Dendritic cell treated with granulocyte-macrophage colony-stimulating factor and Interleukin-4, amounts not matched to agents 40 ng/mL and 50 ng/mL, for 4 days (primary cell): ENCODE measurements at regions of chr5 and their contacts with region 1.

Region 1: GRCh38 chr5:10201223-10201868 is 48.3 kb downstream of the ATPSCKMT start:
- H3K4me3 Mint-ChIP-seq: no peak overlapping the region
- H3K27ac Mint-ChIP-seq: no peak overlapping the region
- H3K4me1 Mint-ChIP-seq: peaks cover 6% of the 10 kb centered on the region
- H3K27me3 Mint-ChIP-seq: peaks cover 3% of the 10 kb centered on the region

Region 2: GRCh38 chr5:9361835-9362234 is 839.5 kb before region 1 on chr5:
- intact Hi-C with region 1: no loop called
- H3K4me3 Mint-ChIP-seq: no peak overlapping the region
- H3K27ac Mint-ChIP-seq: no peak overlapping the region
- H3K4me1 Mint-ChIP-seq: no peaks in the 10 kb centered on the region
- H3K27me3 Mint-ChIP-seq: peaks cover 1% of the 10 kb centered on the region

Region 3: DNA sequence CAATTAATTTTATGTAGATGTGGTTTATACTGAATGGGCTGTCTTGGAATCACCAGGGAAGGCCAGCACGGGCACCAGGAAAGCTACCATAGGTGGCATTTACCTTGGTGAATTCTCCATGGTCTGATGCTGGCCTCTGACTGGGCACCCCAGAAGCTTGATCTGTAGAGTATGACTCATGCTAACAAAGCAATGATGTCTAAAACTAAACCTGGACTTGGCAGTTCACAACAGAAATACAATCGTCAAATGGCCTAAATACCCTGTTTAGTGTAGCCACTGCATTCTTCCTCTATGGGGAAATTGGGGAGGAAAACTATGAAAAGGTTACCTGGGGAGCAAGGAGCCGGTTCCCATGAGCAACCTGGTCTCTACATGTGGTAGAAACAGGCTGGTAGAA is 49.7 kb before region 1 on chr5:
- intact Hi-C with region 1: loop called (anchors 5 kb)
- H3K4me3 Mint-ChIP-seq: no peak overlapping the region
- H3K27ac Mint-ChIP-seq: no peak overlapping the region
- H3K4me1 Mint-ChIP-seq: no peaks in the 10 kb centered on the region
- H3K27me3 Mint-ChIP-seq: peaks cover 3% of the 10 kb centered on the region